ENCODE measurements at regions of chr2 and their contacts with region 1.

Region 1: GRCh38 chr2:55885129-55885943 is 38.2 kb downstream of the EFEMP1 start:
- DNase-seq: no peak

Region 2: GRCh38 chr2:55565613-55566012 is 319.7 kb before region 1 on chr2:
- intact Hi-C with region 1: no loop called
- DNase-seq: no peak

Region 3: DNA sequence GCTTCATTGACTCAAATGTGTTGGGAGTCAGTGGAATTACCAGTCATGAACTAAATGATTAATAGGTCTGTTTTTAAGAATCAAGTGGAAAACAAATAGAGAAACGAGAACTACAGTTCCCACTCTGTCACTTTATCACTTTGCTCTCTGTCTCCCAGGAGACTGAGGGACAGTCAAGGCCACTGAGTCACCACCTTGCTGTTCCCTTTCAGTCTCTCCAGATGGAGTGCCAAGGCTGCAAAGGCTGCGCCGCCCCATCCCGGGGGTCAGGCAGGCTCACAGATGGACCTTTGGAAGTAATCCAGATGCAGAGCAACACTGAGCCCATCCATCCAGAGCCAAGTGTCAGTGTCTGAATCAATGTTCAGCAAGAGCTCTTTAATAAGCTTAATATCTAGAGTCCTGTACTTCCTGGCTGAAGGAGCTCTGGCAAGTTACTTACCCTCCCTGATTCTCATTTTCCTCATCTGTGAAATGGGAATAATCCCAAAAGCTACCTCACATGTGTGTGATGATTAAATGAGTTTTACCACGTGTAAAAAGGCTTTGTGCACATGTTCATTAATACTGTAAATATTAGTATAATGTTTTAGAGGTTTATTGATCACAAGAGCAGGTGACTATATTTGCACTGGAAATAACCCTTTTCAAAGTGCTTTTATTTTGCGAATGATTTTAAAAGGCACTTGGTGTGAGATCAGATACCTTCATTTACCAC is 81.2 kb after region 1 on chr2:
- intact Hi-C with region 1: loop called (anchors 5 kb)
- DNase-seq: no peak

Region 4: GRCh38 chr2:55992465-55992864 is 107.1 kb after region 1 on chr2:
- intact Hi-C with region 1: loop called (anchors 5 kb)
- DNase-seq: no peak